ENCODE measurements at regions of chr16 and their contacts with region 1.

Region 1: DNA sequence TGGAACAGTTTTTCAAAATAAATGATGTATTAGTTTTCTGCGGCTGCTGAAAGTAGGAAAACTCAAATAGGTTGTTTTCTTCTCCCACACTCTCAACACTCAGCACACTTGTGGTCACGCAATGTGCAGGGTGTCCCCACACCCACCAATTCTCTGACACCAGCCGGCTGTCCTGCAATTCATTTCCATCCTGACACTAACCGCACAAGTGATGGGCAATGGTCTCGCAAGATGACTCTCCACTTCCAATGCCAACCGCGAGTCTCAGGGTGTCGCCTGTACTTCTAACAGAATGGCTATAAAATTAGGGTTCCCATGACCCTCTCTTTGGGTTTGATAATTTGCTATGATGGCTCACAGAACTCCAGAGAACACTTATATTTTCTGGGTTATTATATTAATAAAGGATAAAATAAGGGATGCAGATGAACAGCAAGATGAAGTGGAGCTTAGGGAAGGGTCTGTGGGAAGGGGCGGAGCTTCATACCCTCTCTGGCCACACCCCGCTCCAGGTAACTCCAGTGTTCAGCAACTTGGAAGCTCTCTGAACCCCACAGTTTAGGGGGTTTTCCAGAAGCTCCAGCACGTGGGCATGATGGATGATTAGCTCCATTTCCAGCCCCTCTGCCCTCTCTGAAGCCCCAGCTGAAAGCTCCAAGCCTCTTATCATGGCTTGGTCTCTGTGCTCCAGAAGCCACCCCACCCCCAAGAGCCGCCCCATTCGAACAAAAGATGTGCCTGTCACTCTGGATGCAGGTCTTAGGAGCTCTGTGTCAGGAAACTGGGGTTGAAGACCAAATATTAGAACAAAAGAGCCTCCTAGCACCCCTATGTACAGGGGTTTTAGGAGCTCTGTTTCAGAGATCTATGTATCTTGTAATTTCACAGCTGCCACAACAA is 19.8 kb downstream of the TAF1C start:
- DNase-seq: no peak
- H3K4me3 ChIP-seq: no peak overlapping the region
- H3K27ac ChIP-seq: no peak overlapping the region
- H3K4me1 ChIP-seq: no peaks in the 10 kb centered on the region
- H3K27me3 ChIP-seq: peaks cover 4% of the 10 kb centered on the region; the same call in 1 of the 2 replicates
- CTCF ChIP-seq: no peak

Region 2: DNA sequence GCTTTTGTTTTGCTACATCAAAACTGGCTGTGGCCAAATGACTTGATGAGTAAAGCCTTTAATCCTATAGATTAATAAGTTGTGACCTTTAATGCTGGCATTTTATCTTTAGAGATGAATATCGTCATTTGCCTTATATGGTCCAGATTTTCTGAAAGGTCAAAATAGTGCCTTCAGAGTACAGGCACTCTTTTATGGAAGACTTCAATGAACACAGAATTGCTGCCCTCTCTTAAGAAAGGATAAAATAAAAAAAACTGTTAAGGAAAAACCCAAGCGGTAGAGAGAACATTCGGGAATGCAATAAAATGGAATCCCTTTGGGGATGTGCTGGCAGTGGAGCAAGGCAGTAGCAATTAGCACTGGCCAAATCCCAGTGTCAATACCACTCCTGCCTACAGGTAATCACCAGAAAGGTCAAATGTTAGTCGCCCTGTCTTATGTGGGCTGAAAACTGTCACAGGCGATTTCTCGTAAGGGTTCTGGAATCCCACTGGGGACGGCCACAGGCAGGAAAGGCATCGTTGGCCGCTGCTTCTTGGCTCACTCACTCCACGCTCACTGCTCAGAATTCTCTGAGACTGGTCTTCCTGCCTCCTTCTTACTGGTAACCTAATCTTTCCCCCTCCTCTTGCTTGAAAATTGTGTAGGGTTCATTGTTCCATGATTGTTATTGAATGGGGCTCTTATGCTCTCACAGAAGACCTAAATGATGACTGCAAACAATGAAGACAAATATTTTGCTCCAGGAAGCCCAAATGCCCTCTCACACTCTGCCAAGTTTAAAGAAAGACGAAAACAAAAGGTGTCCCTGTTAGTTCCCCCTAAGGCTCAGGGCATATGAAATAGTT is 404.7 kb before region 1 on chr16:
- CTCF ChIA-PET with region 1: no interaction called
- POLR2A ChIA-PET with region 1: no interaction called
- intact Hi-C with region 1: no loop called
- DNase-seq: no peak
- H3K4me3 ChIP-seq: no peak overlapping the region
- H3K27ac ChIP-seq: no peak overlapping the region
- H3K4me1 ChIP-seq: no peaks in the 10 kb centered on the region
- H3K27me3 ChIP-seq: peaks cover 50% of the 10 kb centered on the region
- CTCF ChIP-seq: no peak

Region 3: DNA sequence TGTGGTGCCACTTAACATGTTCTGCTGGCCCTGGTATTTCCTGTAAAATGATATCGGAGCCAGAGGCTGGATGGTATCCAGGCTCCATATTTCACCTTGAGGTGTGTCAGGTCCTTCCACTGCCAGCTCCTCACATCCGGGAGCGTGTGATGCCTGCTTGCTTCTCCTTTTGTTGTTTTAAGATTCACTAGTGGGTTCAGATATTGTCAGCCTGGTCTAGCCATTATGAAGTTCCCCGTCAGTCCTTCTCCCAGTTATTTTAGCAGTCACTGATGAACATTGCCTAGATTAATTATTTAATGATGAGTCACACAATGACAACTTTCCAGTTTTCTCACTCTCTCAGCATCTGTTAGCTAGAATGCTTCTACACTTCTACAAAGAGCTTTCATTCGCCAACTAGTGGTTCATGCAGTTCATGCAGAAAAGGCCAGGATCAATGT is 10.7 kb before region 1 on chr16:
- CTCF ChIA-PET with region 1: no interaction called
- POLR2A ChIA-PET with region 1: no interaction called
- intact Hi-C with region 1: no loop called
- DNase-seq: peak; percentile 18 to 61
- H3K4me3 ChIP-seq: no peak overlapping the region
- H3K27ac ChIP-seq: no peak overlapping the region
- H3K4me1 ChIP-seq: no peaks in the 10 kb centered on the region
- H3K27me3 ChIP-seq: peaks cover 5% of the 10 kb centered on the region; the same call in 1 of the 2 replicates
- CTCF ChIP-seq: peak; percentile 24; the same call in 1 of the 2 replicates

Region 4: GRCh38 chr16:84368308-84368996 is 201.4 kb after region 1 on chr16 and contains the start of gene ATP2C2:
- CTCF ChIA-PET with region 1: no interaction called
- POLR2A ChIA-PET with region 1: no interaction called
- intact Hi-C with region 1: no loop called
- DNase-seq: peak; percentile 68 to 79
- H3K4me3 ChIP-seq: peak within 1 kb of the TSS; percentile 91
- H3K27ac ChIP-seq: no peak within 1 kb of the TSS; the same call in 1 of the 2 replicates
- H3K4me1 ChIP-seq: peaks cover 33% of the 10 kb centered on the region
- H3K27me3 ChIP-seq: no peaks in the 10 kb centered on the region
- CTCF ChIP-seq: no peak
- total RNA-seq, gene ATP2C2: 11.9 and 17.2 TPM in 2 replicates

Region 5: GRCh38 chr16:84641643-84642358 is 474.8 kb after region 1 on chr16:
- CTCF ChIA-PET with region 1: no interaction called
- POLR2A ChIA-PET with region 1: interaction called, 13 read pairs
- intact Hi-C with region 1: no loop called
- DNase-seq: no peak
- H3K4me3 ChIP-seq: no peak overlapping the region
- H3K27ac ChIP-seq: no peak overlapping the region
- H3K4me1 ChIP-seq: peaks cover 15% of the 10 kb centered on the region
- H3K27me3 ChIP-seq: no peaks in the 10 kb centered on the region
- CTCF ChIP-seq: no peak